ENCODE measurements at regions of chr1 and their contacts with region 1.

Region 1: GRCh38 chr1:225866061-225866837 is 15.9 kb downstream of the TMEM63A start:
- DNase-seq: peak in 8 of 9 donors; percentile 58 to 78 (median 68)
- ATAC-seq: peak; percentile 91
- H3K4me3 ChIP-seq: no peak overlapping the region
- H3K4me3 Mint-ChIP-seq: peak overlapping the region; percentile 44 to 80 (median 66)
- H3K27ac ChIP-seq: peak overlapping the region; percentile 68
- H3K27ac Mint-ChIP-seq: peak overlapping the region; percentile 68 to 94 (median 85)
- H3K4me1 ChIP-seq: peaks cover 25 to 32% of the 10 kb centered on the region in 2 donors
- H3K4me1 Mint-ChIP-seq: peaks cover 36 to 58% (median 51%) of the 10 kb centered on the region in 7 donors
- H3K27me3 ChIP-seq: no peaks in the 10 kb centered on the region
- H3K27me3 Mint-ChIP-seq: no peaks in the 10 kb centered on the region

Region 2: DNA sequence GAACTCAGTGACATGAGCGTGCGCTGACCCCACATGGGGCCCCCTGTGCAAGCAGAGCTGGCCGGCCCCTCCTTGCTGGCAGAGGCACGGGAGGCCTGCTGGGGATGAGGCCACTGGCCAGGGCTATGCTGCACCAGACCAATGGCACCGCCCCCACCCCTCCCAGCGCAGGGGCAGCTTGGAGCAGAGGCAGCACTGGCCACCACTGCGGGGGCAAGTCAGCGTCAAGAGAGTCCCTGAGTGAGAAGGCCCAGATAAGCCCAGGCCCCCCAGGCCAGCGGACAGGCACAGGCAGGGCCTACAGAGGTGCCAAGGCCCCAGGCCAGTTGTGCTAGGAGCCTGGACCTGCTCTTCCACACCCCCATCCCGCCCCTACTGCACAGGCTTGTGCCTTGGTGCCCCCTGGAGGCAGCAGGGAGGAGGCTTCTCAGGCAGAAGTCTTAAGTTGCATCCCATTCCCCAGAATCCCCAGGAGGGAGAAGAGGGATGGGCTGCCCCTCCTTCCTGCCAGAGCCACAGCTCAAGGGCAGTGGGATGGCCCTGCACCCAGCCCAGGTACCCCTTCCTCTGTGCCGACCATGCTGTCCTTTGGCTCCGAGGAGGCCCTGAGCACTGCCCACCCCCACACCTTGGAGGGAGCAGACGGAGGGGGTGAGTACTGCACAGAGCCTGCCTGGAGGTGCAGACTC is 20.5 kb before region 1 on chr1:
- CTCF ChIA-PET with region 1: interaction called, 3 read pairs
- POLR2A ChIA-PET with region 1: interaction called, 3 read pairs
- intact Hi-C with region 1: loop called in 1 of 2 experiments (anchors 2 kb)
- DNase-seq: peak in 4 of 9 donors; percentile 35 to 55 (median 46)
- ATAC-seq: peak; percentile 36
- H3K4me3 ChIP-seq: no peak overlapping the region
- H3K4me3 Mint-ChIP-seq: no peak overlapping the region
- H3K27ac ChIP-seq: no peak overlapping the region
- H3K27ac Mint-ChIP-seq: peak overlapping the region in 6 of 9 donors; percentile 12 to 98 (median 36)
- H3K4me1 ChIP-seq: peaks cover 37 to 38% of the 10 kb centered on the region in 2 donors
- H3K4me1 Mint-ChIP-seq: peaks cover 19 to 50% (median 43%) of the 10 kb centered on the region in 7 donors
- H3K27me3 ChIP-seq: no peaks in the 10 kb centered on the region
- H3K27me3 Mint-ChIP-seq: no peaks in the 10 kb centered on the region

Region 3: GRCh38 chr1:225855503-225856300 is 10.5 kb before region 1 on chr1:
- CTCF ChIA-PET with region 1: interaction called, 3 read pairs
- POLR2A ChIA-PET with region 1: interaction called, 6 read pairs
- intact Hi-C with region 1: loop called in 1 of 2 experiments (anchors 1 kb)
- DNase-seq: no peak
- ATAC-seq: no peak
- H3K4me3 ChIP-seq: no peak overlapping the region
- H3K4me3 Mint-ChIP-seq: no peak overlapping the region
- H3K27ac ChIP-seq: no peak overlapping the region
- H3K27ac Mint-ChIP-seq: peak overlapping the region in 7 of 9 donors; percentile 36 to 81 (median 69)
- H3K4me1 ChIP-seq: peaks cover 0 to 12% of the 10 kb centered on the region in 2 donors
- H3K4me1 Mint-ChIP-seq: peaks cover 22 to 51% (median 33%) of the 10 kb centered on the region in 7 donors
- H3K27me3 ChIP-seq: no peaks in the 10 kb centered on the region
- H3K27me3 Mint-ChIP-seq: no peaks in the 10 kb centered on the region

Region 4: GRCh38 chr1:226100436-226101391 is 234.5 kb after region 1 on chr1:
- CTCF ChIA-PET with region 1: no interaction called
- POLR2A ChIA-PET with region 1: no interaction called
- intact Hi-C with region 1: no loop called
- DNase-seq: peak in 6 of 9 donors; percentile 31 to 56 (median 44)
- ATAC-seq: peak; percentile 70
- H3K4me3 ChIP-seq: peak overlapping the region; percentile 58
- H3K4me3 Mint-ChIP-seq: peak overlapping the region; percentile 82 to 94 (median 88)
- H3K27ac ChIP-seq: peak overlapping the region; percentile 42
- H3K27ac Mint-ChIP-seq: peak overlapping the region in 7 of 9 donors; percentile 17 to 89 (median 76)
- H3K4me1 ChIP-seq: no peaks in the 10 kb centered on the region
- H3K4me1 Mint-ChIP-seq: peaks cover 7 to 17% (median 13%) of the 10 kb centered on the region in 7 donors
- H3K27me3 ChIP-seq: no peaks in the 10 kb centered on the region
- H3K27me3 Mint-ChIP-seq: peaks cover 0 to 15% (median 4%) of the 10 kb centered on the region in 5 donors